Uterus (tissue), 4 donors: ENCODE measurements at regions of chr16 and their contacts with region 1.

Region 1: DNA sequence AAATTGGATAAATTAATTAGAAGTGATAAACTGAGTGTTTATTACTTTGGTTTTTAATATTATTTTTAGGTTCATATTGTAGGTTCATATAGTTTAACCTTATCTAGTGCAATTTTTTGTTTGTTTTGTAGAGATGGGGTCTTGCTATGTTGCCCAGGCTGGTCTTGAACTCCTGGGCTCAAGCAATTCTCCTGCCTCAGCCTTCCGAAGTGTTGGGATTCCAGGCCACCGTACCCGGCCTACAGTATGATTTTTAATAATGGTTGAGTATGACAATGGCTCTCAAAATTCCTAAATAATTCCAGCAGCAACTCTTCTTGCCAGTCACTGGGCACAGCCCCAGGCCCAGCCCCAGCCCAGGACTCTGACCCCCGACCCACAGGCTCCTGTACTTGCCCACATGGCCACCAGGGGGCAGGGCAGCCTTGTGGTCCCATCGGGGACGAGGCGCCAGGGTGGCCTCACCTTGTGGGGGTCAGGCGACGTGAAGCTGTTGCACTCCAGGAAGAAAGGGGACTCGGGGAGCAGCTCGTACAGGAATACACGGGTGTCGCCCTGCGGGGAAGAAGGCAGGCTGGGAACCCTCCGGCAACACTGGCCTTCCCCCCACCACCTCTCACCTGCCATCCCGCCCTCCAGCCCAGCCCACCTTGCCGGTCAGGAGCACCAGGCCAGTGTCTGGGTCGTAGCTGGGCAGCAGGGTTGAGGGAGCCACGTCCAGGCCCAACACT is 7.9 kb upstream of the PAM16 start:
- DNase-seq: peak; percentile 71 to 75
- H3K4me3 ChIP-seq: no peak overlapping the region
- H3K27ac ChIP-seq: no peak overlapping the region
- H3K4me1 ChIP-seq: no peaks in the 10 kb centered on the region
- H3K27me3 ChIP-seq: no peaks in the 10 kb centered on the region
- CTCF ChIP-seq: peak; percentile 94 to 99 (median 99)
- POLR2A ChIP-seq: peak in 1 of 2 donors; percentile 26

Region 2: DNA sequence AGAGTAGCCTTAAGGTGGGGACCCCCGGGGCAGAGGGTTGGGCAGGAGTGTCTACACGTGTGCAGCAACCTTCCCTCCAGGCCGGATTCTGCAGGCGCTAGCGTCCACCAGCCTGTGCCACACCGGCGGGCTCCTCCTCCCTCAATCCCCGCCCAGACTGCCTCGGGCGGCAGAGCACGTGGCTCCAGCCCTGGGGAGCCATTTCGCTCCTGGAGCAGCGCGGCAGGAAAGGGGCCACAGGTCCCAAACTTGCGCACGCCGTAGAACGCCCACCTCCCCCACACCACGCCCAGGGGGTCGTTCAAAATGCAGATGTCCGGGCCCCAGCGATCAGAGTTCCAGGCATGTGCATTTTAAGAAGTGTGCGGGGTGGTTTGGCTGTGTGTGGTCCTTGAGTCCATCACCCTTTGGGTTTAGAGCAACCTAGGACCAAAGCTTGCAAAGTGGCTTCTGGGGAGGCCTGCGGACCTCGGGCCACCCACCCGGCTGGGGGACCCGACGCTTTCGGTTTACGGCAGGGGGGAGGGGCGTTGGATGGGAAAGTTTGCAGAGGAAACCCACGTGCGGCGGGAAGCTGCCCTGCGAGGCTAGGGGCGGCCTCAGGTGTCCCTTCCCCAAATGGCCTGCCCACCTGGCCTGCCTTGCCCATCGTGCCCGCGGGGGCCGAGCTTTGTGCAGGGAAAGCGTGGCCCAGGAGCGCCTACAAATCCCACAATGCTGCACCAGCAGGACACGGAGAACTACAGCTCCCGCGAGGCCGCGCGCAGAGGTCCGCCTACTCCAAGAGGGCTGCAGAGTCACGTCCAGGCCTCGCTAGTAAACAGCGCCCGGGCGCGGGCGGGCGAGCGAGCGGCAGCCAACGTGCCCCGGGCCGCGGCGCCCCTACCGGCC is 87.6 kb before region 1 on chr16:
- intact Hi-C with region 1: no loop called
- DNase-seq: peak; percentile 88 to 90
- H3K4me3 ChIP-seq: peak overlapping the region; percentile 67 to 99
- H3K27ac ChIP-seq: peak overlapping the region; percentile 88 to 89
- H3K4me1 ChIP-seq: peaks cover 0 to 5% of the 10 kb centered on the region in 2 donors
- H3K27me3 ChIP-seq: no peaks in the 10 kb centered on the region
- CTCF ChIP-seq: peak in 1 of 4 experiments; percentile 36
- POLR2A ChIP-seq: peak; percentile 66 to 76

Region 3: DNA sequence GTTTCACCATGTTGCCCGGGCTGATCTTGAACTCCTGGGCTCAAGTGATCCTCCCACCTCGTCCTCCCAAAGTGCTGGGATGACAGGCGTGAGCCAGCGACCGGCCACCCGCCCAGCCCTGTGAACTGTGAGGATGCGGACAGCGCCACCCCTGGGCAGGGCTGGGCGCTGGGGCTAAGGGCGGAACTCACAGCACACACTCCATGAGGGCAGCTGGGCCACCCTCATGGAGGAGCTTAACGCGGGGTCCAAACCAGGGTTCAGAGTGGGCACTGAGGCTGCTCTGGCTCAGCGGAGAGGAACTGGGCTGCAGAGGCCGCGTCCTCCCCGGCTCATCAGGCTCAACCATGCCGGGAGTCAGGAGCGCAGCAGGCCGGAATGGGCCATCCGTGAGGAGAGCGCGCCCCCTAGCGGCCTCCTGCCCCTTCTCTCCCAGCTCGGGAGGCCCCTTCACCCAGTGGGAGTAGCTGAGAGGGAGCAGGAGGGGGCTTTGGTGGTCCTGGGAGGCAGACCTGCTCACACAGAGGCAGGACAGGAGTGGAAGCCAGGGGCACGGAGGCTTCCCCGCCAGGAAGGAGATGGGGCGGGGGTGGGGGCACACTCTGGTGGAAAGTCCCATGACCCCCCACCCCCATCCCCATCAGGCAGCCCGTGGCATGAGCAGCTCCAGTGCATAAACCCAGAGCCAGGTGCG is 43.6 kb after region 1 on chr16:
- intact Hi-C with region 1: loop called (anchors 2 kb)
- DNase-seq: peak; percentile 83 to 87
- H3K4me3 ChIP-seq: no peak overlapping the region
- H3K27ac ChIP-seq: no peak overlapping the region
- H3K4me1 ChIP-seq: no peaks in the 10 kb centered on the region
- H3K27me3 ChIP-seq: no peaks in the 10 kb centered on the region
- CTCF ChIP-seq: peak; percentile 95 to 99 (median 97)
- POLR2A ChIP-seq: peak in 1 of 2 donors; percentile 29